CD8-positive, alpha-beta T cell (primary cell): ENCODE measurements at regions of chr17 and their contacts with region 1.

Region 1: GRCh38 chr17:81666342-81667191 is at the starts of genes CCDC137 and OXLD1:
- DNase-seq: peak; percentile 78 to 96 (median 93)
- ATAC-seq: peak; percentile 83
- H3K4me3 ChIP-seq: peak within 1 kb of the TSS; percentile 78 to 98
- H3K4me3 Mint-ChIP-seq: peak within 1 kb of the TSS; percentile 95
- H3K27ac ChIP-seq: peak within 1 kb of the TSS; percentile 72 to 83
- H3K27ac Mint-ChIP-seq: peak within 1 kb of the TSS; percentile 97
- H3K4me1 ChIP-seq: peaks cover 48% of the 10 kb centered on the region
- H3K4me1 Mint-ChIP-seq: peaks cover 50% of the 10 kb centered on the region
- H3K27me3 ChIP-seq: no peaks in the 10 kb centered on the region
- H3K27me3 Mint-ChIP-seq: no peaks in the 10 kb centered on the region
- CTCF ChIP-seq: no peak
- total RNA-seq, gene CCDC137: 18.0 to 19.9 TPM
- total RNA-seq, gene OXLD1: 24.4 to 26.1 TPM

Region 2: GRCh38 chr17:81294856-81295680 is 371.5 kb before region 1 on chr17 and contains the start of gene SLC38A10:
- CTCF ChIA-PET with region 1: no interaction called
- POLR2A ChIA-PET with region 1: no interaction called
- intact Hi-C with region 1: loop called in 1 of 2 experiments (anchors 10 kb)
- DNase-seq: peak; percentile 78 to 94 (median 91)
- ATAC-seq: peak; percentile 83
- H3K4me3 ChIP-seq: peak within 1 kb of the TSS; percentile 77 to 98
- H3K4me3 Mint-ChIP-seq: peak within 1 kb of the TSS; percentile 94
- H3K27ac ChIP-seq: peak within 1 kb of the TSS; percentile 85 to 90
- H3K27ac Mint-ChIP-seq: peak within 1 kb of the TSS; percentile 96
- H3K4me1 ChIP-seq: peaks cover 24% of the 10 kb centered on the region
- H3K4me1 Mint-ChIP-seq: peaks cover 42% of the 10 kb centered on the region
- H3K27me3 ChIP-seq: no peaks in the 10 kb centered on the region
- H3K27me3 Mint-ChIP-seq: no peaks in the 10 kb centered on the region
- CTCF ChIP-seq: no peak
- total RNA-seq, gene SLC38A10: 16.1 to 17.4 TPM

Region 3: DNA sequence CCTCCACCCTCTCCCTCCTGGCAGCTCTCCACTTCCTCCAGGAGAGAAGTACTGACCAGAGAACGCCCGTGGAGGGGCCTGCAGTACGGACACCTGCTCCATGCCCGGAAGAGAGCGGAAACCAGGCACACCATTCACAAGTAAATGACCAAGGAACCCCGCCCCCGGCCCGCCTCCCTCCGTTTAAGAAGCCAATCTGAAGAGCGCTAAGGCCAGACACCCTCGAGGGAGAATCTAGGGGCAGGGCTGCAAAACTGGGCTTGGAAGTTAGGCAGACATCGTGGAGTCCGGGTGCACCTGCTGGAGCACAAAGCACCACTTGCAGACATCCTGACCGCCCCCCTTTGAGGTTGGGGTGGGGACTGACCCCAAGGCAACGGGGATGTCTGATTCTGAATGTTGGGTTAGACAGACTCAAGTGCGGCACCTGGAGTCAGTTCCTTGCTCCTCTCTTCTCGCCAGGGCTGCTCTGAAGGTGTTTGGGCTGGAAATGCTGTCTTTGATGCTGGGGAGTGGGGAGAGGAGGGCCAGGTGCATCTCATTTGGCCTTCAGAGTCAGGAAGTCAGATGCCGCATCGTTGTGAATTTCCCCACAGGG is 113.5 kb before region 1 on chr17:
- CTCF ChIA-PET with region 1: no interaction called
- POLR2A ChIA-PET with region 1: no interaction called
- intact Hi-C with region 1: loop called in 1 of 2 experiments (anchors 10 kb)
- DNase-seq: peak; percentile 55 to 91 (median 79)
- ATAC-seq: peak; percentile 71
- H3K4me3 ChIP-seq: peak overlapping the region; percentile 92 to 96
- H3K4me3 Mint-ChIP-seq: peak overlapping the region; percentile 86
- H3K27ac ChIP-seq: peak overlapping the region; percentile 82 to 84
- H3K27ac Mint-ChIP-seq: peak overlapping the region; percentile 87
- H3K4me1 ChIP-seq: peaks cover 21% of the 10 kb centered on the region
- H3K4me1 Mint-ChIP-seq: peaks cover 31% of the 10 kb centered on the region
- H3K27me3 ChIP-seq: no peaks in the 10 kb centered on the region
- H3K27me3 Mint-ChIP-seq: no peaks in the 10 kb centered on the region
- CTCF ChIP-seq: no peak

Region 4: GRCh38 chr17:81652906-81653771 is 13.4 kb before region 1 on chr17:
- CTCF ChIA-PET with region 1: no interaction called
- POLR2A ChIA-PET with region 1: interaction called, 14 read pairs
- intact Hi-C with region 1: no loop called
- DNase-seq: peak in 6 of 9 experiments; percentile 11 to 59 (median 32)
- ATAC-seq: peak; percentile 77
- H3K4me3 ChIP-seq: peak overlapping the region; percentile 48 to 52
- H3K4me3 Mint-ChIP-seq: peak overlapping the region; percentile 82
- H3K27ac ChIP-seq: peak overlapping the region in 1 of 2 experiments; percentile 31
- H3K27ac Mint-ChIP-seq: peak overlapping the region; percentile 82
- H3K4me1 ChIP-seq: peaks cover 23% of the 10 kb centered on the region
- H3K4me1 Mint-ChIP-seq: peaks cover 21% of the 10 kb centered on the region
- H3K27me3 ChIP-seq: peaks cover 2 to 10% of the 10 kb centered on the region in 2 experiments
- H3K27me3 Mint-ChIP-seq: peaks cover 13% of the 10 kb centered on the region
- CTCF ChIP-seq: no peak

Region 5: GRCh38 chr17:81702971-81703746 is 36.6 kb after region 1 on chr17 and contains the start of gene MRPL12:
- CTCF ChIA-PET with region 1: no interaction called
- POLR2A ChIA-PET with region 1: no interaction called
- intact Hi-C with region 1: loop called (anchors 1 to 5 kb)
- DNase-seq: peak; percentile 73 to 95 (median 90)
- ATAC-seq: peak; percentile 87
- H3K4me3 ChIP-seq: peak within 1 kb of the TSS; percentile 79 to 84
- H3K4me3 Mint-ChIP-seq: peak within 1 kb of the TSS; percentile 87
- H3K27ac ChIP-seq: peak within 1 kb of the TSS; percentile 96 to 97
- H3K27ac Mint-ChIP-seq: peak within 1 kb of the TSS; percentile 94
- H3K4me1 ChIP-seq: peaks cover 29% of the 10 kb centered on the region
- H3K4me1 Mint-ChIP-seq: peaks cover 31% of the 10 kb centered on the region
- H3K27me3 ChIP-seq: no peaks in the 10 kb centered on the region
- H3K27me3 Mint-ChIP-seq: no peaks in the 10 kb centered on the region
- CTCF ChIP-seq: no peak
- total RNA-seq, gene MRPL12: 33.2 to 36.6 TPM

Region 6: DNA sequence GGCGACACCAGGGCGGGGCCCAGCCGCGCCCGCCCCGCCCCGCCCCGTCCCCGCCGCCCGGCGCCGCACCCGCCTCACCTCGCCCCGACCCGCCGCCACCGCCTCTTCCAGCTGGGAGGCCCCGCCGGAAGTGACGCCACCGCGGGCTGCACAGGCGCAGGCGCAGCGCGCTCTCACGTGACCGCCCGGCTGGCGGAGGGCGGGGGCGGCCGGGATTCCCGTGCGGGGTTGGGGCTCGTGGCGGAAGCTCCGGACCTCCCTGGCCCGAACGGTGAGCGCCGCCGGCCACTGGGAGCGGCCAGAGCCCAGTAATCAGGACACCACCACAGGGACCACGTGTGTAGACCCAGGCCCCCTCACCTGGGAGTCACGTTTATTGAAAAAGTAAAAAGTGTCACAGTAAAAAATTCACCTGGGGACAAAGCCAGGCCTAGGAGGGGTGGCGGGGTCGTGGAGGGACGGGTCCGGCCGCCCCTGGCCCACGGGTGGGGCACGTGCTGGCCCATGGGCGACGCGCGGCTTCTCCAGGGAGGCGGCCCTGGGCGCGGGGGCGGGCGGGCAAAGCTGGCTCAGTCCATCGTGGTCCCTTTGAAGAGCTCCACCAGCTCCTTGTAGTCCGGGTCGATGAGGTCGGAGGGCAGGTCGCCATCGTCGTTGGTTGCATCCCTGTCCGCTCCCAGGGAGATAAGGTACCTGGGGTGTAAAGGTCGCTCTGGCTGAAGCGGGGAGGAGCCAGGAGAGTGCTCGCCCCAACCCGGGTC is 166.8 kb after region 1 on chr17 and contains the start of gene MCRIP1:
- CTCF ChIA-PET with region 1: no interaction called
- POLR2A ChIA-PET with region 1: no interaction called
- intact Hi-C with region 1: loop called in 1 of 2 experiments (anchors 1 kb)
- DNase-seq: peak; percentile 80 to 97 (median 94)
- ATAC-seq: peak; percentile 74
- H3K4me3 ChIP-seq: peak within 1 kb of the TSS; percentile 71 to 80
- H3K4me3 Mint-ChIP-seq: peak within 1 kb of the TSS; percentile 94
- H3K27ac ChIP-seq: peak within 1 kb of the TSS; percentile 90 to 93
- H3K27ac Mint-ChIP-seq: peak within 1 kb of the TSS; percentile 96
- H3K4me1 ChIP-seq: peaks cover 17% of the 10 kb centered on the region
- H3K4me1 Mint-ChIP-seq: peaks cover 23% of the 10 kb centered on the region
- H3K27me3 ChIP-seq: no peaks in the 10 kb centered on the region
- H3K27me3 Mint-ChIP-seq: no peaks in the 10 kb centered on the region
- CTCF ChIP-seq: no peak
- total RNA-seq, gene MCRIP1: 32.2 to 34.0 TPM